Naive thymus-derived CD4-positive, alpha-beta T cell (primary cell): ENCODE measurements at regions of chr16 and their contacts with region 1.

Region 1: GRCh38 chr16:57091975-57092785 is at the start of gene CPNE2:
- DNase-seq: peak in 2 of 9 donors; percentile 17 to 29
- ATAC-seq: peak; percentile 63
- H3K4me3 ChIP-seq: peak within 1 kb of the TSS; percentile 50
- H3K4me3 Mint-ChIP-seq: peak within 1 kb of the TSS; percentile 65 to 86 (median 80)
- H3K27ac ChIP-seq: peak within 1 kb of the TSS; percentile 10
- H3K27ac Mint-ChIP-seq: peak within 1 kb of the TSS in 8 of 9 donors; percentile 14 to 78 (median 52)
- H3K4me1 ChIP-seq: peaks cover 0 to 13% of the 10 kb centered on the region in 2 donors
- H3K4me1 Mint-ChIP-seq: peaks cover 8 to 19% (median 10%) of the 10 kb centered on the region in 7 donors
- H3K27me3 ChIP-seq: no peaks in the 10 kb centered on the region
- H3K27me3 Mint-ChIP-seq: peaks cover 0 to 34% (median 0%) of the 10 kb centered on the region in 5 donors
- total RNA-seq, gene CPNE2: 1.1 to 11.7 (median 3.5) TPM

Region 2: DNA sequence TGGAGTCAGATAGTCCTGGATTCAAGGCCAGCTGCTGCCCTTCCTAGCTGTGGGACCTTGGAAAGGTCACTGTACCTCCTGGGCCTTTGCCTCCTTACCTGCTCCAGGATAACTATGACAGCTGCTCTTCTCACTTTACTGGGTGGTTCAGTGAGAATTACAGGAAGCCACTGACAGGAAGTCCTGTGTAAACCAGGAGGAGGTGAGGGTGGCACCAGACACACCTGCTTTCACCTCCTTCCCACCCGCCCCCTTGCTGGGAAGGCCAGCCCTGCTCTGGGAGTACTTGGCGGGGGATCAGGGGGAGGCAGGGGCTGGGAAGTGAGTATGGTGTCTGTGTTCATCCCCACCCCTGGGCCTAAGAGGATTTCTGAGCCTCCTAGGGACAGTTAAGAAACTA is 42.8 kb after region 1 on chr16:
- CTCF ChIA-PET with region 1: interaction called, 8 read pairs
- POLR2A ChIA-PET with region 1: interaction called, 6 read pairs
- intact Hi-C with region 1: loop called in 1 of 2 experiments (anchors 2 kb)
- DNase-seq: peak in 8 of 9 donors; percentile 34 to 59 (median 48)
- ATAC-seq: peak; percentile 82
- H3K4me3 ChIP-seq: peak overlapping the region; percentile 75
- H3K4me3 Mint-ChIP-seq: peak overlapping the region; percentile 83 to 97 (median 88)
- H3K27ac ChIP-seq: peak overlapping the region; percentile 80
- H3K27ac Mint-ChIP-seq: peak overlapping the region; percentile 88 to 96 (median 95)
- H3K4me1 ChIP-seq: peaks cover 61 to 65% of the 10 kb centered on the region in 2 donors
- H3K4me1 Mint-ChIP-seq: peaks cover 31 to 97% (median 79%) of the 10 kb centered on the region in 7 donors
- H3K27me3 ChIP-seq: no peaks in the 10 kb centered on the region
- H3K27me3 Mint-ChIP-seq: no peaks in the 10 kb centered on the region